Right ventricle myocardium inferior (tissue), 1 donor: ENCODE measurements at regions of chr2 and their contacts with region 1.

Region 1: GRCh38 chr2:228652366-228652765 is 470.9 kb upstream of the SPHKAP start:
- DNase-seq: no peak
- ATAC-seq: no peak

Region 2: GRCh38 chr2:228348516-228349064 is 303.8 kb before region 1 on chr2:
- intact Hi-C with region 1: loop called (anchors 5 kb)
- DNase-seq: no peak
- ATAC-seq: peak; percentile 87

Region 3: GRCh38 chr2:228377533-228377932 is 274.8 kb before region 1 on chr2:
- intact Hi-C with region 1: loop called (anchors 2 kb)
- DNase-seq: no peak
- ATAC-seq: no peak

Region 4: GRCh38 chr2:228426502-228427216 is 225.7 kb before region 1 on chr2:
- intact Hi-C with region 1: loop called (anchors 5 kb)
- DNase-seq: no peak
- ATAC-seq: peak; percentile 84

Region 5: GRCh38 chr2:228777855-228778355 is 125.5 kb after region 1 on chr2:
- intact Hi-C with region 1: no loop called
- DNase-seq: no peak
- ATAC-seq: no peak